ENCODE measurements at regions of chr11 and their contacts with region 1.

Region 1: GRCh38 chr11:64304316-64305072 is 830 bp upstream of the ESRRA start:
- DNase-seq: peak; percentile 64 to 95 (median 76)
- ATAC-seq: peak; percentile 69
- H3K4me3 ChIP-seq: peak overlapping the region; percentile 72
- H3K27ac ChIP-seq: peak overlapping the region; percentile 100
- H3K4me1 ChIP-seq: peaks cover 32 to 53% of the 10 kb centered on the region in 2 experiments
- H3K27me3 ChIP-seq: no peaks in the 10 kb centered on the region
- CTCF ChIP-seq: peak; percentile 84 to 94 (median 87)
- EP300 ChIP-seq: peak; percentile 19
- POLR2A ChIP-seq: peak; percentile 77
- RAD21 ChIP-seq: peak; percentile 60 to 65

Region 2: GRCh38 chr11:64240394-64241174 is 63.9 kb before region 1 on chr11 and contains the start of gene FKBP2:
- CTCF ChIA-PET with region 1: no interaction called
- POLR2A ChIA-PET with region 1: interaction called, 5 read pairs
- in situ Hi-C with region 1: no loop called
- intact Hi-C with region 1: loop called (anchors 10 kb)
- DNase-seq: peak; percentile 89 to 98 (median 93)
- ATAC-seq: peak; percentile 70
- H3K4me3 ChIP-seq: peak within 1 kb of the TSS; percentile 99
- H3K27ac ChIP-seq: peak within 1 kb of the TSS; percentile 95
- H3K4me1 ChIP-seq: peaks cover 28 to 70% of the 10 kb centered on the region in 2 experiments
- H3K27me3 ChIP-seq: no peaks in the 10 kb centered on the region
- CTCF ChIP-seq: no peak
- EP300 ChIP-seq: peak; percentile 21; the same call in 1 of the 2 replicates
- POLR2A ChIP-seq: peak; percentile 97
- RAD21 ChIP-seq: no peak
- polyA plus RNA-seq, gene FKBP2: 3.5 to 27.1 TPM

Region 3: GRCh38 chr11:64324692-64325469 is 20.4 kb after region 1 on chr11:
- CTCF ChIA-PET with region 1: no interaction called
- POLR2A ChIA-PET with region 1: no interaction called
- in situ Hi-C with region 1: no loop called
- intact Hi-C with region 1: no loop called
- DNase-seq: no peak
- ATAC-seq: no peak
- H3K4me3 ChIP-seq: no peak overlapping the region
- H3K27ac ChIP-seq: no peak overlapping the region
- H3K4me1 ChIP-seq: peaks cover 2 to 28% of the 10 kb centered on the region in 2 experiments; a peak in 4 of 5 replicates
- H3K27me3 ChIP-seq: no peaks in the 10 kb centered on the region
- CTCF ChIP-seq: no peak
- EP300 ChIP-seq: no peak
- POLR2A ChIP-seq: no peak
- RAD21 ChIP-seq: no peak

Region 4: DNA sequence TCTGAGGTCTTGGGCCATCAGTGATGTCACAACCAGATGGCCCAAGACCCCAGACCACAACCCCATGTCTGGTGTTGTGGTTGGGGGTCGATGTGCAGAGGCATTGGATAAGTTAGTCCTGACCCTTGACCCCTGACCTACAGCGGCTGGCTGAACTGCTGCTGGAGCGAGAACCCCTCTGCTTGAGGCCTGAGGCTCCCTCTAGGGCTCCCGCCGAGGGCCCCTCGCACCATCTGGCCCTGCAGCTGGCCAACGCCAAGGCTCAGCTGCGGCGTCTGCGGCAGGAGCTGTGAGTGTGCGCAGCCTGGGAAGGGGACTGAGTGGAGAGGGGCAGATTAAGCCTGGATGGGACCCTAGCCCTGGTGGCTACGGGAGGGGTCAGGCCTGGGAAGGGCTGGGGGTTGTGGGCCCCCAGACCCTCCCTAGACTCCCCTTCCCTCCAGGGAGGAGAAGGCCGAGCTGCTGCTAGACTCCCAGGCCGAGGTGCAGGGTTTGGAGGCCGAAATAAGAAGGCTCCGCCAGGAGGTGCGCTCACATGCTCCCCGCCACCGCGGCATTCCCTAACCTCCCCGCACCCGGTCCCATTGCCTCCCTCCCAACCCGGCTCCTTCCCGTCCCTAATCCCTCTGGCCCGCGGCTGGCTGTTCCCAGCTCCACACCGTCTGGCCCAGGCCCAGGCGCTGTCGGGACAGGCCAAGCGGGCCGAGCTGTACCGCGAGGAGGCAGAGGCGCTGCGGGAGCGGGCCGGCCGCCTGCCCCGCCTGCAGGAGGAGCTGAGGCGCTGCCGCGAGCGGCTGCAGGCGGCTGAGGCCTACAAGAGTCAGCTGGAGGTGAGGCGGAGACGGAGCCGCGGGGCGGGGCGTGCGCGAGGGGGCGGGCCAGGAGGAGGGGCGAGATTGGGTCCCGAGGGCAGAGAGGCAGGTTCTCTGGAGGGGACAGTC is 37.6 kb after region 1 on chr11:
- CTCF ChIA-PET with region 1: interaction called, 3 read pairs
- POLR2A ChIA-PET with region 1: interaction called, 5 read pairs
- in situ Hi-C with region 1: no loop called
- intact Hi-C with region 1: loop called (anchors 2 kb)
- DNase-seq: peak; percentile 95 to 97 (median 96)
- ATAC-seq: peak; percentile 95
- H3K4me3 ChIP-seq: peak overlapping the region; percentile 39
- H3K27ac ChIP-seq: peak overlapping the region; percentile 54
- H3K4me1 ChIP-seq: peaks cover 26 to 54% of the 10 kb centered on the region in 2 experiments; a peak in 4 of 5 replicates
- H3K27me3 ChIP-seq: no peaks in the 10 kb centered on the region
- CTCF ChIP-seq: peak; percentile 57 to 96 (median 75)
- EP300 ChIP-seq: no peak
- POLR2A ChIP-seq: peak; percentile 66
- RAD21 ChIP-seq: peak; percentile 42 to 67

Region 5: DNA sequence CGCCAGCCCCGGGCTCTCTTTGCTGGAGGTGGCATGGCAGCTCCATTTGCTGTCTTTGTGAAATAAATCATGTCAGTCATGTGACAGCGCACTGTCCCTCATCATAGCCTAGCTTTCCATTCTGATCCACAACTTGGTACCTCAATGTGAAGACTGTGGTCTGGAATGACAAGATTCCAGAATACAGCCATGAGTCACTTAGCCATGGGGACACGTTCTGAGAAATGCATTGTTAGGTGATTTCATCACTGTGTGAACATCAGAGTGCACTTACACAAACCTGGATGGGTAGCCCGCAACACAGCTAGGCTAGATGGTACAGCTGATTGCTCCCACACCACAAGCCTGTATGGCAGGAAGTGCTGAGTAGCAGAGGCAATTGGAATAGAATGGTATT is 81.8 kb after region 1 on chr11:
- CTCF ChIA-PET with region 1: no interaction called
- POLR2A ChIA-PET with region 1: no interaction called
- in situ Hi-C with region 1: no loop called
- intact Hi-C with region 1: no loop called
- DNase-seq: no peak
- ATAC-seq: no peak
- H3K4me3 ChIP-seq: no peak overlapping the region
- H3K27ac ChIP-seq: no peak overlapping the region
- H3K4me1 ChIP-seq: peaks cover 9 to 11% of the 10 kb centered on the region in 2 experiments
- H3K27me3 ChIP-seq: peaks cover 49 to 77% of the 10 kb centered on the region in 2 experiments
- CTCF ChIP-seq: no peak
- EP300 ChIP-seq: no peak
- POLR2A ChIP-seq: no peak
- RAD21 ChIP-seq: no peak

Region 6: GRCh38 chr11:66126808-66127555 is 1822.5 kb after region 1 on chr11:
- CTCF ChIA-PET with region 1: no interaction called
- POLR2A ChIA-PET with region 1: no interaction called
- in situ Hi-C with region 1: no loop called
- intact Hi-C with region 1: no loop called
- DNase-seq: no peak
- ATAC-seq: peak; percentile 71
- H3K4me3 ChIP-seq: no peak overlapping the region
- H3K27ac ChIP-seq: no peak overlapping the region
- H3K4me1 ChIP-seq: peaks cover 0 to 12% of the 10 kb centered on the region in 2 experiments; a peak in 2 of 5 replicates
- H3K27me3 ChIP-seq: no peaks in the 10 kb centered on the region
- CTCF ChIP-seq: 0 out of 6 replicates have a peak, but pooled peaks of 1 of the 3 experiments have one; percentile 8
- EP300 ChIP-seq: no peak
- POLR2A ChIP-seq: no peak
- RAD21 ChIP-seq: no peak